ENCODE measurements at regions of chr22 and their contacts with region 1.

Region 1: DNA sequence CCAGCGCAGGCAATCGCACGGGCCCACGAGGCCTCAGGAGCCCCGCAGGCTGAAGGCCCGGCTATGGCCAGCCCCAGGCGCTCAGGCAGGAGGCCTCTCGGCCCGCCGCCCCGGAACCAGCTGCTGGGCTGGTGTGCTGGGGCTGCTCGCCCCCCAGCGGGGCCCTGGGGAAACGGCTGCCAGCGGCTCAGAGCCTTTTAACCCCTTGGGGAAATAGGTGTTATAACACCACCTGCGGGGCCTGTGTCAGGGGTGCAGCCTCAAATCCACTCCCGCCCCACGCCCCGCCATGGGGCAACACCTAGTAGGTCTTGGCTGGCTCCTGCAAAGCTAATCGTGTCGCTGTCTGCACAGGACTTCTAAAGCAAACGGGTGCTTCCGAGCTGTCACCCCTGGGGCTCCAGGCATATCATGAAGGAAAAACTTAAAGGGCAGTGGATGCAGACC is 237.4 kb downstream of the TTC28 start:
- DNase-seq: peak; percentile 60 to 96 (median 77)

Region 2: DNA sequence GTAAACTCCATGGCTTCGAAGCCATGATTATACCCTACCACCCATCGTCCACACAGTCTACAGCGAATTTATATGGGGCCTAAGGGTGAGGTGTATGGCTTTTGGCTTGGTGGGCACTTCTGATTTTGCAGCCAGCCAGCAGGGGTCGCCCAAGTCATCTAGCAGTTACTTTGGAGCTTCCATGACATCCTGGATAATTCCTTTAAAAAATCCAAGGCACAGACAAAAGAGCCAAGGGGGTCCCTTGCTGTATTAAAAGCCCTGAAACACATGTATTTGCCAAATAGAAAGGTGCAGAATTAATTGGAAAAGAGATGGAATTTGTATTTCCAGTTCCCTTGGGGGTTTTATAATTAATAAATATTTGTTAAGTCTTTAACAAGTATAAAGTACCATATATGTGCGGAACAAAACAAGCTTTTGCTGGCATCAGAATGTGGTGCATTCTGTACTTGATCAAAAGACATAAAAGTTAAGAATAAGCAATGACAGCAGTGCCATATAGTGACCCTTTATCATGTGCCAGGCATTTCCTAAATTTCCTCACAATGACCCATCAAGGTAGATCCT is 390.4 kb before region 1 on chr22:
- intact Hi-C with region 1: loop called (anchors 2 kb)
- DNase-seq: peak; percentile 43 to 95 (median 74)

Region 3: GRCh38 chr22:28252539-28252938 is 189.7 kb before region 1 on chr22:
- intact Hi-C with region 1: loop called (anchors 2 kb)
- DNase-seq: no peak

Region 4: GRCh38 chr22:28497188-28497587 is 54.9 kb after region 1 on chr22:
- intact Hi-C with region 1: no loop called
- DNase-seq: no peak

Region 5: GRCh38 chr22:28594797-28595462 is 152.6 kb after region 1 on chr22:
- intact Hi-C with region 1: loop called (anchors 2 kb)
- DNase-seq: no peak

Measured in posterior cingulate gyrus (tissue), 11 donors.